BJ (cell line): ENCODE measurements at regions of chr6 and their contacts with region 1.

Region 1: DNA sequence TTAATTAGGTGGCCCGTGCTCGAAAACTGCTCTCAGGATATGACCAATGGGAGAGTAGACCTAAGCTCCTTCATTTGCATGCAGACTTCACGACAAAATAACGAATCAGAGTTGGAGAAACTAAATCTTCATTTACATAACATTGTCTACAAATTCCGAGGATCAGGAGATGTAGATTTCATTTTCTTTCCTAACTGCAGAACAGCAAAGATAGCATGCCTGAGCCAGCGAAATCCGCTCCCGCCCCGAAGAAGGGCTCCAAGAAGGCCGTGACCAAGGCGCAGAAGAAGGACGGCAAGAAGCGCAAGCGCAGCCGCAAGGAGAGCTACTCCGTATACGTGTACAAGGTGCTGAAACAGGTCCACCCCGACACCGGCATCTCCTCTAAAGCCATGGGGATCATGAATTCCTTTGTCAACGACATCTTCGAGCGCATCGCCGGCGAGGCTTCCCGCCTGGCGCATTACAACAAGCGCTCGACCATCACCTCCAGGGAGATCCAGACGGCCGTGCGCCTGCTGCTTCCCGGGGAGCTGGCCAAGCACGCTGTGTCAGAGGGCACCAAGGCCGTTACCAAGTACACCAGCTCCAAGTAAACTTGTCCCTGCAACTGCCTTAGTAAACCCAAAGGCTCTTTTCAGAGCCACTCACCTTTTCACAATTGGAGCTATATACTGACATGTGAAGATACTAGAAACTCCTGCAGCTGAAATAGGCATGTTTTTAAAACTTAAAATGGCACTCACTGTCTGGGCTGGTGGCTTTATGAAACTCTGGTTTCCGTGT is 96.5 kb downstream of the HFE start:
- DNase-seq: peak; percentile 92
- H3K4me3 ChIP-seq: peak overlapping the region; percentile 32
- H3K27me3 ChIP-seq: no peaks in the 10 kb centered on the region
- CTCF ChIP-seq: no peak

Region 2: GRCh38 chr6:26172496-26172958 is 11.2 kb before region 1 on chr6:
- CTCF ChIA-PET with region 1: interaction called, 24 read pairs
- POLR2A ChIA-PET with region 1: no interaction called
- DNase-seq: no peak
- H3K4me3 ChIP-seq: peak overlapping the region; percentile 46
- H3K27me3 ChIP-seq: no peaks in the 10 kb centered on the region
- CTCF ChIP-seq: no peak

Region 3: GRCh38 chr6:26196846-26197648 is 13.3 kb after region 1 on chr6:
- CTCF ChIA-PET with region 1: interaction called, 6 read pairs
- POLR2A ChIA-PET with region 1: interaction called, 15 read pairs
- DNase-seq: peak; percentile 83
- H3K4me3 ChIP-seq: peak overlapping the region; percentile 82
- H3K27me3 ChIP-seq: no peaks in the 10 kb centered on the region
- CTCF ChIP-seq: 0 out of 2 replicates have a peak, but pooled peaks have one; percentile 13